ENCODE measurements at regions of chr17 and their contacts with region 1.

Region 1: DNA sequence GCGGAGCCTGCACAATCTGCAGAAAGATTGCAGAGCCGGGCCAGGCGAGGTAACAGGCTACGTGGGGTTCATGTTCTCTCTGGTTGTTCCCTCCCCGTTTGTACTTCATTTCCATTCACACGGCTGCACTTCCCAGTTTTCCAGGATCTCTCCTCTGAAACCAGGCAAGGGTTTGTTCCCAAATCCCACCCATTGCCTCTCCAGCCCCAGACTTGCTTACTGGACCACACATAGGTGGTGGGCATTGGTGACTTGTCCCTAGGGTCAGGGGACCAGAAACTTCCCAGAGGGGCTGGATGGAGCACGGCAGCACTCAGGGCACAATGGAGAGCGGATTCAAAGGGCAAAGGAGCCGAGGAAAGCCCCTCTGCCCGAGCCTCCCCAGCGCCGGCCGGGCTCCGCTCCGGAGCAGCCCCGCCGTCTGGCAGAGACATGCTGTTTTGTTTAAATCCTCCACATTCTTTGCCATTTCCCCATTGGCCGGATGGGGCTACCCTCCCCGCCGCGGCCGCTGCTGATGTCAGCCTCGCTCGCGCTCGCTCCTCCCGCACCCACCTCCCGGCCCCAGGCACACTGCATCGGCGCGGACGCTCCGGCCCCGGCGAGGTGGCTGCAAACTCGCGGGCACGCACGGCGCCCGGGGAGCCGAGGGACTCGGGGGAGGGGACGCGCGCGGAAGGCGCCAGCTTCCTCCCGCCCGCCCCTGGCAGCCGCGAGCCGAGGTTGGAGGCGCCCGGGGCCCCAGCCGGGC is at the start of gene PITPNC1:
- DNase-seq: peak; percentile 82
- H3K4me3 Mint-ChIP-seq: peak within 1 kb of the TSS; percentile 84
- H3K27ac Mint-ChIP-seq: peak within 1 kb of the TSS; percentile 63
- H3K4me1 Mint-ChIP-seq: peaks cover 23% of the 10 kb centered on the region
- H3K27me3 Mint-ChIP-seq: peaks cover 34% of the 10 kb centered on the region
- total RNA-seq, gene PITPNC1: 10.9 and 11.2 TPM in 2 replicates

Region 2: GRCh38 chr17:67366193-67367157 is 10.4 kb before region 1 on chr17 and contains the start of gene PSMD12:
- intact Hi-C with region 1: loop called (anchors 1 kb)
- DNase-seq: peak; percentile 90
- H3K4me3 Mint-ChIP-seq: peak within 1 kb of the TSS; percentile 96
- H3K27ac Mint-ChIP-seq: peak within 1 kb of the TSS; percentile 95
- H3K4me1 Mint-ChIP-seq: peaks cover 45% of the 10 kb centered on the region
- H3K27me3 Mint-ChIP-seq: peaks cover 20% of the 10 kb centered on the region
- total RNA-seq, gene PSMD12: 75.1 and 75.4 TPM in 2 replicates

Region 3: DNA sequence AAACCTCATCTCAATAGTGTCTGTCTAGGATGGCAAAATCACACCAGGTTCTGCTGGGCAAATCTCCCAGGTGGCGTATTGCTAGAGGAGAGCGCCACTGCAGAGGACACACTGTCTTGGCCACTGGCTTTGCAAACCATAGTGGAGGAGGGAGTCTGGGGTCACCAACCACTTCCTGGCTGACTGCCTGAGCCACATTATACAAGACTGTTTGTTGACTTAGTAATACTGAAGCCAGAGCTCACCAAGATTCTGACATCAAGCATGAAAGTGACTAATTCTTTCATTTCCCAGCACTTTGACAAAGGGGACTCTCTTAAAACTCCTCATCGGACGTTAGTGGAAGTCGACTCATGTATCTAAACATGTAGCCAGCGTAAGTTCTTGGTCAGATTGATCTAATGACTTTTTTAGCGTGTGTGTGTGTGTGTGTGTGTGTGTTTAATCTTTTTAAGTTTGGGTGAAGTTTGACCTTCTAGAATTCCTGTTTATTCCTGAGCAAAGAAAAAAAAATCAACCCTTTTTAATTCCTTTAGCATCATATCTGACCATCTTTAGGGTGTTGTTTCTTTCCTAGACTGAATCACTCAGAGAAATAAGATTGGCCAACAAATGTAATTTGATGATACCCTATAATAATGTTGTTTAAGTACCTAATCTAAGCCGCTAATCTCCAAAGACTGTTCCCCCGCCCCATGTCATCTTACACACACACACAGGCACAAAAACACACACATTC is 13.9 kb after region 1 on chr17:
- intact Hi-C with region 1: loop called (anchors 2 kb)
- DNase-seq: peak; percentile 64
- H3K4me3 Mint-ChIP-seq: peak overlapping the region; percentile 67
- H3K27ac Mint-ChIP-seq: peak overlapping the region; percentile 85
- H3K4me1 Mint-ChIP-seq: peaks cover 35% of the 10 kb centered on the region
- H3K27me3 Mint-ChIP-seq: no peaks in the 10 kb centered on the region

Region 4: DNA sequence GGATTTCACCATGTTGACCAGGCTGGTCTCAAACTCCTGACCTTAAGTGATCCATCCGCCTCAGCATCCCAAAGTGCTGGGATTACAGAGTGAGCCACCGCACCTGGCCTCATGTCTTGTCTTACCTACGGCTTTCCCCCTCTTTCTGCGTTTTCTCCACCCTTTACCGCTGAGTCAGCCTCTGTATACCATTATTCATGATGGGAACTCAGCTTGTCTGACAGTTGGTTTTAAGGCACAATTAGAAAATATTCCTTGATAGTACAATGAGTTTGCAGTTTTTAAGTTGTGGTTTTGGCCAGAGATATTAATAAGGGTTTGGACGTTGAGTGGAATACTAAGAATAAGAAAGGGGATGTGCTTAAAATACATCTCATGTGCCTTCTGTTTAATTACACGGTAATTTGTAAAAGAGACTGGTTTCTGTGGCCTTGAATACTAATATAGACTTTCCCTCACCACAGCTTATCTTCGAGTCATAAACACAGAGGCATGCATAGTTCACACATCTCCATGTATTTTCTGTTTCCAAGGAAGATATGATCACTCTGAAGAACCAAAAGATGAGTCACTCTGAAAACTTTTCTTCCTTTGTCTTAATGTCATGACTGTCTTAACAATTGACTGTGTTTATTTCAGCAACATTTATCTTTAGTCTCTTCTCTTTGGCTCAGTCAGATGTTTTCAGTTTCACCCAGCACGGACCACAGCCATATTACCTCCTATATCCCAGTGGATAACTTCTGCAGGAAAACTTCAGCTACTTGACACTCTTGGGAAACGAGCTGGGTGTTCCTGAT is 54.5 kb after region 1 on chr17:
- intact Hi-C with region 1: no loop called
- DNase-seq: no peak
- H3K4me3 Mint-ChIP-seq: peak overlapping the region; percentile 5
- H3K27ac Mint-ChIP-seq: peak overlapping the region; percentile 73
- H3K4me1 Mint-ChIP-seq: peaks cover 43% of the 10 kb centered on the region
- H3K27me3 Mint-ChIP-seq: peaks cover 4% of the 10 kb centered on the region

Region 5: GRCh38 chr17:67475236-67475937 is 98.5 kb after region 1 on chr17:
- intact Hi-C with region 1: loop called (anchors 1 kb)
- DNase-seq: peak; percentile 77
- H3K4me3 Mint-ChIP-seq: peak overlapping the region; percentile 30
- H3K27ac Mint-ChIP-seq: peak overlapping the region; percentile 62
- H3K4me1 Mint-ChIP-seq: peaks cover 44% of the 10 kb centered on the region
- H3K27me3 Mint-ChIP-seq: peaks cover 3% of the 10 kb centered on the region

Region 6: DNA sequence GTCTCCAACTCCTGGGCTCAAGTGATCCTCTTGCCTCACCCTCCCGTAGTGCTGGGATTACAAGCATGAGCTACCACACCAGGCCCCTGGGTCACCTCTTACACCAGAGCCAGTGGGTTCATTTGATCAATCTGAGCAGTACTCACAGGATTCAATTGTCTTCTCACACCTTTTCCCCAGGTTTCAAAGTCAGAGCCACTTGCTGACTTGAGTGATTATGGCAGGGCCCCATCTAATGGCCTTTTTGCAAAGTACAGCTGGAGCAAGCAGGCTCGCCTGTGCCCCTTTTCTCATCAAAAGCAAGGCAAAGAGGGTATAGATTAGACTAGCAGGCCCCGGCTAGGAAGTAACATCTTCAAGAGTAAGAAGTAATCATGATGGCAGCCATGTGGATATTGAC is 226.0 kb after region 1 on chr17:
- intact Hi-C with region 1: loop called (anchors 2 kb)
- DNase-seq: peak; percentile 32
- H3K4me3 Mint-ChIP-seq: no peak overlapping the region
- H3K27ac Mint-ChIP-seq: no peak overlapping the region
- H3K4me1 Mint-ChIP-seq: no peaks in the 10 kb centered on the region
- H3K27me3 Mint-ChIP-seq: no peaks in the 10 kb centered on the region

Region 7: DNA sequence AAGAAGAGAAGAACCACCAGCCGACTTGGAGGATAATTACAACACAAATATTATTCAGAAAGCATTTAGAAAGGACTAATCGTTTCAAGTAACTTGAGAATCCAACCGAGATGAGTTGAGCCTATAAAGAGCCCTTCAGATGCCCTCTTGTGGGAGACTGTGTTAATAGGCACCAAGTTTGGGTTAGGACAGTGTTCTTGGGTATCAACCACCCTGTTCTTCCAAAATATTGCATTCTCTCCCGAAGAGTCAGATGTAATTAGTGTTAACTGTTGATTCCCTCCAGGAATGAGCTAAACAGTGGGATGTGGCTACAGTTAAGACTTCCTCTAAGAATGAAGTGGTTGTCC is 253.0 kb after region 1 on chr17:
- intact Hi-C with region 1: loop called (anchors 2 kb)
- DNase-seq: no peak
- H3K4me3 Mint-ChIP-seq: no peak overlapping the region
- H3K27ac Mint-ChIP-seq: no peak overlapping the region
- H3K4me1 Mint-ChIP-seq: no peaks in the 10 kb centered on the region
- H3K27me3 Mint-ChIP-seq: no peaks in the 10 kb centered on the region

Region 8: DNA sequence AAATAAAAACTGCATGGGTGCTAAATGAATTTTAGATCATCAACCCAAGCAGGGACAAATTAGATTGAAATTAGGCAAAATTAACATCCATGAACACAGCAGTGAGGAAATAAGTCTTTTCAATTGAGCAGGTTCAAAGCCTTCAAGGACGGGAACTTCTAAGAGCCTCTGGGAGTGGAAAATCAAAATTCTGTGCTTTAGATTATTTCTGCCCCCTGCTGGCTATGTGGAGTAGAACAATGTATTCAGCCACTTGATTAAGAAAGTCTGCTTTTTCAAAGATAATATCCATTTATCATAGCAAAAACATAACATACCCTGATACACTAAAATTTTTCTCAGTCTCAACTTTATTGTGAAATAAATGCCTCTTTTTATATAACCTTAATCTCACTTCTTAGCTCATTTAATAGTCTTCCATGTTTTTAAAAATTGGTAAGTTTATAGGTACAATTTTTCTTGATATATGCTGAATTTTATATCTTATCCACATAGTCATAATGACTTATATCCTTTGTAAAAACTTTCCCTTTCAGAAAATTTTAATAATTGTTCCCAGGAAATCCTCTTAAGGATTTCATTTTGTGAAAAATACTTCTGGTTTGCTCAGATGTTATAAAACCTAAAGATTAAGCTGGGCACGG is 312.7 kb after region 1 on chr17:
- intact Hi-C with region 1: loop called (anchors 1 kb)
- DNase-seq: peak; percentile 23
- H3K4me3 Mint-ChIP-seq: no peak overlapping the region
- H3K27ac Mint-ChIP-seq: no peak overlapping the region
- H3K4me1 Mint-ChIP-seq: peaks cover 3% of the 10 kb centered on the region
- H3K27me3 Mint-ChIP-seq: no peaks in the 10 kb centered on the region